MCF 10A (cell line): ENCODE measurements at regions of chr2 and their contacts with region 1.

Region 1: DNA sequence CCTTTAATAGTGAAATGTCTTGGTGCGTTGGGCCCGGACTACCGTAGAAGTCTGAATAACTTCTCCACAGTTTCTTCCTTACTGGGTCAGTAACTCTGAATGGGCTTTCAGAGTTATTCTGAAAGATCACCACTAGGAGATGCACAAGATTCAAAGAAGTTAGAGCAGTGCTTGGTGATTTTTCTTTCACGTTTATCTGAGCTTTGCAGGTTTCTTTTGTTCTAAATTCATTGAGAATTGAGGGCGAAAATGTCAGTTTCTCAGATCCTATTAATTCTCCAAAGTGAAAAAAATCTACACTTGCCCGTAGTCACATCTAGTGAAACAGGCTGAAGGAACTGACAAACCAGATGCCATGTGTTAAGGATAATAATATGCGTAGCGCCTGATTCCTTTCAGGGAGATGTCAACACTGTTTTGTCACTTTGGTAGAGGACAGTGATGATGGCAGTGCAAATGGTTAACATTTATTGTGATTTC is 70.1 kb downstream of the QPCT start:
- DNase-seq: peak; percentile 65
- H3K4me3 Mint-ChIP-seq: no peak overlapping the region
- H3K27ac Mint-ChIP-seq: no peak overlapping the region
- H3K4me1 Mint-ChIP-seq: peaks cover 12% of the 10 kb centered on the region
- H3K27me3 Mint-ChIP-seq: no peaks in the 10 kb centered on the region
- CTCF ChIP-seq: peak; percentile 81

Region 2: DNA sequence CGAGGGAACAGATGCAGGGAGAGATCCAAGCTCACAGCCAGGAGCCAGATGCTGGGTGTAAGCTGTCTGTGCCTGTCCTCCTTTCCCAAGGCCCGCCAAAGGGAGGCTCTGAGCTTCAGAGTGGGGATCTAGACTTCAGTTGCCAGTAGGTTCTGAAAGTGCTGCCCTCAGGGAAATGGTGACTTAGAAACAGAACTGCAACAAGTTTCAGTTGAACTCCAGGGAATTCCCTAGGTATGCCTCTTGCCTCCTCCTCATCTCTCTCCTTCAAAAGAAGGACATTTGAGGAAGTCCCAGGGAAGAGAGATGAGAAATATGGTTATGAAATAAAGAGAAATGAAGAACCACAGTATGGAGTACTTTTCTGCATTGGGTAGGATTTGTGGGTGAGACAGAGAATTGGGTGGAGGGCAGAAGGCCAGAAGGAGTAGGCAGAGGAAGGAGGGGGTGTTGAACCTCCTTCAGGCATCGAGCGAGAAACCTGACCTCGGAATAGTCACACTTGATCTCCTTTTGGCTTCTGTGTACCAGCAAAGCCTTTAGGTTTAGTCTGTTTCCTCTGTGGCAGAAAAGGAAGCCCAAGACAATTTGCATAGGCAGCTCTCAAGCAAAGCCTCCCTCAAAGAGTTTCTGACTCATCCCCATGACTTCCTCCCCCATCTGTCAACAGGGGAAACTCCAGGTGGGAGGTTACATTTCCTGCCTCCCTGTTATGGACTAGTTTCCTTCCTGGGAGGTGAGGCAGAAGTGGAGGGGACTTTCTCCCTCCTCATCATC is 24.3 kb before region 1 on chr2:
- CTCF ChIA-PET with region 1: interaction called, 28 read pairs
- POLR2A ChIA-PET with region 1: no interaction called
- intact Hi-C with region 1: no loop called
- DNase-seq: peak; percentile 92
- H3K4me3 Mint-ChIP-seq: no peak overlapping the region
- H3K27ac Mint-ChIP-seq: peak overlapping the region; percentile 64
- H3K4me1 Mint-ChIP-seq: peaks cover 19% of the 10 kb centered on the region
- H3K27me3 Mint-ChIP-seq: no peaks in the 10 kb centered on the region
- CTCF ChIP-seq: no peak

Region 3: GRCh38 chr2:37523814-37524362 is 109.4 kb after region 1 on chr2:
- CTCF ChIA-PET with region 1: interaction called, 10 read pairs
- POLR2A ChIA-PET with region 1: no interaction called
- intact Hi-C with region 1: no loop called
- DNase-seq: peak; percentile 86
- H3K4me3 Mint-ChIP-seq: peak overlapping the region; percentile 36
- H3K27ac Mint-ChIP-seq: peak overlapping the region; percentile 82
- H3K4me1 Mint-ChIP-seq: peaks cover 8% of the 10 kb centered on the region
- H3K27me3 Mint-ChIP-seq: no peaks in the 10 kb centered on the region
- CTCF ChIP-seq: no peak

Region 4: GRCh38 chr2:37672104-37672869 is 257.8 kb after region 1 on chr2:
- CTCF ChIA-PET with region 1: interaction called, 9 read pairs
- POLR2A ChIA-PET with region 1: interaction called, 5 read pairs
- intact Hi-C with region 1: loop called (anchors 2 kb)
- DNase-seq: peak; percentile 86
- H3K4me3 Mint-ChIP-seq: peak overlapping the region; percentile 92
- H3K27ac Mint-ChIP-seq: peak overlapping the region; percentile 77
- H3K4me1 Mint-ChIP-seq: peaks cover 35% of the 10 kb centered on the region
- H3K27me3 Mint-ChIP-seq: no peaks in the 10 kb centered on the region
- CTCF ChIP-seq: no peak

Region 5: DNA sequence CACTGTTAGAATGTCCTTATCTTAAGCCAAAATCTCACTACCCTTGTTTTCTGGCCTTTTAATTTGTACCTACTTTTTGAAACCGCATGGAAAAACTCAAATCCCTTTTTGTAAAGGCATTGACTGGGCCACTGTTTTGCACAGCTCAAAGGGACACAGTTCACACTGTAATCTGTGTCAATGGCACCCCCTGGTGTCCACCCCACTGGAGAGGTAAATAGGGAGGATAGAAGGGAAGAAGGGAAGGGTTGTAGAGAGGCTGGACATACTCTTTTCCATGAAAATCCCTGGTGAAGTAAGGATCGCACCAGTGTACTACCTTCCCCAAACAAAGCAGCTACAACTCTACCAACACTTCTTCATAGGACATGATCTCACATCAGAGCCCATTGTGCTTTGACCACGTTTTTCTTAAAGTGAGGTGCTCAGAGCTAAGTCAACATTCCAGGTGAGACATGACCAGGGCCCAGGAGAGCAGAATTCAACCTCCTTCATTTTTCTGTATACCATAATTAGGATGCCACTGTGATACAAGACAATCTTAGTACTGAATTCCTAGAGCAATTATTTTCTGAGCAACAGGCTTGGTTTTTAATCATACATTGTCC is 418.2 kb after region 1 on chr2:
- CTCF ChIA-PET with region 1: interaction called, 135 read pairs
- POLR2A ChIA-PET with region 1: interaction called, 11 read pairs
- intact Hi-C with region 1: loop called (anchors 1 kb)
- DNase-seq: peak; percentile 89
- H3K4me3 Mint-ChIP-seq: no peak overlapping the region
- H3K27ac Mint-ChIP-seq: no peak overlapping the region
- H3K4me1 Mint-ChIP-seq: peaks cover 5% of the 10 kb centered on the region
- H3K27me3 Mint-ChIP-seq: no peaks in the 10 kb centered on the region
- CTCF ChIP-seq: peak; percentile 79

Region 6: DNA sequence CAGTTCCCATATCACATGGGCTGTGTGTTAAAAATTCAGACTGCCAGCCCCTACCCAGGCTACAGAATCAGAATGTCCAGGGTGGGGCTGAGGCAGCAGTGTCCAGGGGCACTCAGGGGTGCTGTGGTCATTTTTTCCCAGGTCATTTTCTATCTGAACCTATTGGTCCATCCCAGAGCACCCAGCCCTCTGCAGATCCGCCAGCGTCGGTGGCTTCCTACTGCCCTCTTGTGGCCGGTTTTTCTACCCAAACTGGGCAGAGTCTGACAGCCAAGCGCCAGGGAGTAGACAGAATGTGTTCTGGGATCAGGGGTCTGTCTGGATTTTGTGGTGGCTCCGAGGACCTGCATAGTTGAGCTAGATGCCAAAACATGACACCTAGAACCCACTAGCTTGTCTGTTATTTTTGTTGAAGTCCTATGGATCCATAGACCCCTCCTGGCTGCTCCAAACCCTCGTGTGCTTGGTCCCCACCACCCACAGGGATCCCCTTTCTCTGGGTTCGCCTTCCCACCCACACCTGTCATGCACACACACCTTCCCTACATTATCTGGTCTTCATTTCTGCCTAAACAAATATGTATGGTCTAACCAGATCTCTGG is 476.5 kb after region 1 on chr2:
- CTCF ChIA-PET with region 1: interaction called, 3 read pairs
- POLR2A ChIA-PET with region 1: no interaction called
- intact Hi-C with region 1: loop called (anchors 1 kb)
- DNase-seq: peak; percentile 73
- H3K4me3 Mint-ChIP-seq: no peak overlapping the region
- H3K27ac Mint-ChIP-seq: no peak overlapping the region
- H3K4me1 Mint-ChIP-seq: peaks cover 14% of the 10 kb centered on the region
- H3K27me3 Mint-ChIP-seq: peaks cover 6% of the 10 kb centered on the region
- CTCF ChIP-seq: peak; percentile 66